ENCODE measurements at regions of chr17 and their contacts with region 1.

Region 1: GRCh38 chr17:36601303-36602029 is at the start of gene MRM1:
- DNase-seq: peak; percentile 88
- H3K4me3 Mint-ChIP-seq: peak within 1 kb of the TSS; percentile 87
- H3K27ac Mint-ChIP-seq: peak within 1 kb of the TSS; percentile 85
- H3K4me1 Mint-ChIP-seq: peaks cover 34% of the 10 kb centered on the region
- H3K27me3 Mint-ChIP-seq: no peaks in the 10 kb centered on the region
- total RNA-seq, gene MRM1: 11.0 to 11.3 TPM

Region 2: GRCh38 chr17:36534840-36535668 is 66.4 kb before region 1 on chr17 and contains the starts of genes MYO19 and PIGW:
- CTCF ChIA-PET with region 1: no interaction called
- intact Hi-C with region 1: loop called (anchors 1 kb)
- DNase-seq: peak; percentile 86
- H3K4me3 Mint-ChIP-seq: peak within 1 kb of the TSS; percentile 98
- H3K27ac Mint-ChIP-seq: peak within 1 kb of the TSS; percentile 96
- H3K4me1 Mint-ChIP-seq: peaks cover 48% of the 10 kb centered on the region
- H3K27me3 Mint-ChIP-seq: no peaks in the 10 kb centered on the region
- total RNA-seq, gene MYO19: 99.6 to 107 TPM
- total RNA-seq, gene PIGW: 10.6 to 11.3 TPM

Region 3: GRCh38 chr17:36623281-36623680 is 21.8 kb after region 1 on chr17:
- CTCF ChIA-PET with region 1: interaction called, 26 read pairs
- intact Hi-C with region 1: no loop called
- DNase-seq: no peak
- H3K4me3 Mint-ChIP-seq: no peak overlapping the region
- H3K27ac Mint-ChIP-seq: no peak overlapping the region
- H3K4me1 Mint-ChIP-seq: no peaks in the 10 kb centered on the region
- H3K27me3 Mint-ChIP-seq: no peaks in the 10 kb centered on the region

Region 4: DNA sequence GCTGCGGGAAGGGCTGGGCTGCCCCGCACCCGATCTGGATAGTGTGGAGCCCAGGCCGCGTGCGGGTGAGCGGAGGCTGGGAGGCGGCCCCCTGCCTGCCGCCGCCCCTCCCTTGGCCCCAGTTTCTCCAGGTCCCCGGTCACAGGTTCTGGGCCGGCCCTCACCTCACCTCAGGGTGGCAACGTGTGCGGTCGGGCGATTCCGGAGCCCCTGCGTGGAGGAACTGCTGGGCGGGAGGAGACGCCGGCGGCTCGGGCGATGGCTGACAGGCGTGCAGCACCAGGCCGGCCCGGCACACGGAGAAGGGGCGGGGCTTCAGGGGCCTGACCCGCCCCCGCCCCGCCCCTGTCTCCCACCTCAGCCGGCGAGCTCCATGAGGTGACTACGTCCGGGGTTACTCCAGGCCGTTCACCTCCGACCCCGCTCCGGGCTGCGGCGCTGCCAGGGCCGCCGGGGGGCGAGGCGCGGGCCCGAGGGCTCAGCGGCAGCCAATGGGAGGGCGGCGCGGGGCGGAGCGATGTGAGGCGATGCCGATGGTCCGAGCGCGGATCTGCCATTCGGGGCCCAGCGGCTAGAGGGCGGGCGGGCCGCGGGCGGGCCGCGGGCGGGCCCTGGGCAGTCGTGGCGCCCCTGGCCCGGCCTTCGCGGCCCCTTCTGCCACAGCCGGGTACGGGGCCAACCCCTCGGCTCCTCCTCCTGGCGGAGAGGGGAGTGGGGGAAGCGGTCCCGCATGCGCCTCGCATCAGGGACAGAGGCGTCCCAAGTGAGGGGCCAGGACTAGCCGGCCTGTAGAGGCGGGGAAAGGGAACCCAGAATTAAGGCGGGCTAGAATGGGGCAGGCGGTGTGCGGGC is 757.6 kb after region 1 on chr17:
- CTCF ChIA-PET with region 1: no interaction called
- intact Hi-C with region 1: loop called (anchors 5 kb)
- DNase-seq: peak; percentile 95
- H3K4me3 Mint-ChIP-seq: peak overlapping the region; percentile 86
- H3K27ac Mint-ChIP-seq: peak overlapping the region; percentile 76
- H3K4me1 Mint-ChIP-seq: peaks cover 21% of the 10 kb centered on the region
- H3K27me3 Mint-ChIP-seq: no peaks in the 10 kb centered on the region

Measured in activated naive CD4-positive, alpha-beta T cell treated with anti-CD3 and anti-CD28 coated beads for 36 hours (primary cell).